Activated B cell treated with CpG ODN at 0.5 μM for 24 hours (primary cell): ENCODE measurements at regions of chr1 and their contacts with region 1.

Region 1: GRCh38 chr1:40197656-40198055 is 36.5 kb downstream of the RLF start:
- DNase-seq: no peak
- ATAC-seq: no peak
- H3K4me3 Mint-ChIP-seq: no peak overlapping the region
- H3K27ac Mint-ChIP-seq: no peak overlapping the region
- H3K4me1 Mint-ChIP-seq: no peaks in the 10 kb centered on the region
- H3K27me3 Mint-ChIP-seq: no peaks in the 10 kb centered on the region
- CTCF ChIP-seq: no peak

Region 2: DNA sequence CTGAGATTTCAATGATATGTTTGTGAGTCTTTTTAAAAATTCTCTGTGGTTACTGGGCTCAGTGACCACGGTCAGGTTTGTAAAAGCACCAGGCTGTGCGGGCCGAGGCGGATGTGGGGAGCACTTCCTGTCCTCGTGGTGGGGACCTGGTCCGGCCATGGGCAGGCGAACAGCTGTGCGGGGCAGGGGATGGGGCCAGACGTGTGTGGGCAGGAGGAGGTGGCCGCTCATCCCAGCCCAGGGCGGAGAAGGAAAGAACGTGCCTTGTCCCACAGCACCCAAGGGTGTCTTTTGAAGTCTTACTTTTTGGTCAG is 421.3 kb before region 1 on chr1:
- CTCF ChIA-PET with region 1: no interaction called
- POLR2A ChIA-PET with region 1: no interaction called
- intact Hi-C with region 1: no loop called
- DNase-seq: no peak
- ATAC-seq: peak; percentile 14
- H3K4me3 Mint-ChIP-seq: peak overlapping the region; percentile 24
- H3K27ac Mint-ChIP-seq: peak overlapping the region; percentile 66
- H3K4me1 Mint-ChIP-seq: peaks cover 7% of the 10 kb centered on the region
- H3K27me3 Mint-ChIP-seq: no peaks in the 10 kb centered on the region
- CTCF ChIP-seq: no peak

Region 3: GRCh38 chr1:40110389-40110788 is 87.3 kb before region 1 on chr1:
- CTCF ChIA-PET with region 1: no interaction called
- POLR2A ChIA-PET with region 1: no interaction called
- intact Hi-C with region 1: no loop called
- DNase-seq: no peak
- ATAC-seq: no peak
- H3K4me3 Mint-ChIP-seq: no peak overlapping the region
- H3K27ac Mint-ChIP-seq: no peak overlapping the region
- H3K4me1 Mint-ChIP-seq: no peaks in the 10 kb centered on the region
- H3K27me3 Mint-ChIP-seq: peaks cover 26% of the 10 kb centered on the region
- CTCF ChIP-seq: no peak

Region 4: GRCh38 chr1:40153073-40153770 is 44.4 kb before region 1 on chr1:
- CTCF ChIA-PET with region 1: interaction called, 22 read pairs
- POLR2A ChIA-PET with region 1: interaction called, 7 read pairs
- intact Hi-C with region 1: no loop called
- DNase-seq: no peak
- ATAC-seq: peak; percentile 77
- H3K4me3 Mint-ChIP-seq: peak overlapping the region; percentile 74
- H3K27ac Mint-ChIP-seq: peak overlapping the region; percentile 90
- H3K4me1 Mint-ChIP-seq: peaks cover 27% of the 10 kb centered on the region
- H3K27me3 Mint-ChIP-seq: no peaks in the 10 kb centered on the region
- CTCF ChIP-seq: no peak

Region 5: DNA sequence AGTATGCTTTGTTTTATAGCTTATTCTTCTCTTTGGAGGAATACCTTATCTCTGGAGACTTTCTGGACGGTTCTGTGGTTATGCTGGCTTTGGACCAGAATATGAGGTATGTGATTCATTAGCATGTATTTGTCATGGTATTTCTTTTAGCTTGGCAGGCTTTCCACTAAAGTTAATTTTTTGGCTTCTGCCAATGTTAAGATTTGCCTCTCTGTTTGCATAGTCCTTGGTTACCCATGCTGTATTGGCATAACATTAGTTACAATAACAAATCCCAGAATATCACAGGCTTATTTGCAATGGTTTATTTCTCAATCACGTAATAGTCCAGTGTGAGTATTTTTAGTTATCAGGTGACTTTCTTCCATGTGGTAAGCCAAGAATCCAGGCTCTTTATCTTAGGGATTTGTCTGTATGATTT is 70.1 kb after region 1 on chr1:
- CTCF ChIA-PET with region 1: no interaction called
- POLR2A ChIA-PET with region 1: no interaction called
- intact Hi-C with region 1: no loop called
- DNase-seq: no peak
- ATAC-seq: no peak
- H3K4me3 Mint-ChIP-seq: no peak overlapping the region
- H3K27ac Mint-ChIP-seq: no peak overlapping the region
- H3K4me1 Mint-ChIP-seq: peaks cover under 1% of the 10 kb centered on the region
- H3K27me3 Mint-ChIP-seq: no peaks in the 10 kb centered on the region
- CTCF ChIP-seq: no peak

Region 6: DNA sequence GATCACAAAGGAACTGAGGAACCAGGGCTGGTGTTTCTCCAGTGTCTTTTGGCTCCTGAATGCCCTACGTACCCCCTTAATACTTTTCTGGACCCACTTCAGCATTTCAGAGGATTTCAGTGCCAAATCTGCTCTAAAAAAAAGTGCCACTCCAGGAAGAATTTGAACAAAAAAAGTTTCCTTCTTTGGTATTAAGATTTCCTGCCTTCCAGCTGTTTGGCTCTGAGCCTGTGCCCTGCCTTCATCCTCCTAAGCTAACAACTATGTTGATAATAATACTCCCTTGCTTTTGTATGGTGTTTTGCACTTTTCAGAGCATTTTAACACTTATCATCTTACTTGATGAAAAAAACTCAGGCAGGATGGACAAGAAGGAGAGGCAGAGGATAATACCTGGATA is 478.8 kb after region 1 on chr1:
- CTCF ChIA-PET with region 1: no interaction called
- POLR2A ChIA-PET with region 1: no interaction called
- intact Hi-C with region 1: no loop called
- DNase-seq: no peak
- ATAC-seq: no peak
- H3K4me3 Mint-ChIP-seq: no peak overlapping the region
- H3K27ac Mint-ChIP-seq: no peak overlapping the region
- H3K4me1 Mint-ChIP-seq: no peaks in the 10 kb centered on the region
- H3K27me3 Mint-ChIP-seq: no peaks in the 10 kb centered on the region
- CTCF ChIP-seq: no peak